Left lung (tissue), 14 donors: ENCODE measurements at regions of chr3 and their contacts with region 1.

Region 1: GRCh38 chr3:49839193-49839809 is 17.1 kb downstream of the TRAIP start:
- DNase-seq: peak; percentile 75 to 89 (median 82)
- ATAC-seq: peak; percentile 95
- H3K4me3 ChIP-seq: no peak overlapping the region
- H3K27ac ChIP-seq: no peak overlapping the region
- H3K4me1 ChIP-seq: peaks cover 0 to 2% of the 10 kb centered on the region in 2 donors
- H3K27me3 ChIP-seq: no peaks in the 10 kb centered on the region
- CTCF ChIP-seq: peak; percentile 82 to 85

Region 2: GRCh38 chr3:49719214-49719884 is 120.0 kb before region 1 on chr3 and contains the start of gene AMIGO3:
- intact Hi-C with region 1: loop called in 1 of 2 experiments (anchors 10 kb)
- DNase-seq: peak; percentile 91 to 99 (median 95)
- ATAC-seq: peak; percentile 77
- H3K4me3 ChIP-seq: peak within 1 kb of the TSS; percentile 37 to 50
- H3K27ac ChIP-seq: peak within 1 kb of the TSS; percentile 3 to 7
- H3K4me1 ChIP-seq: peaks cover 19 to 55% of the 10 kb centered on the region in 2 donors
- H3K27me3 ChIP-seq: no peaks in the 10 kb centered on the region
- CTCF ChIP-seq: peak; percentile 46 to 62
- polyA plus RNA-seq, gene AMIGO3: 0.54 to 2.4 (median 1.9) TPM

Region 3: DNA sequence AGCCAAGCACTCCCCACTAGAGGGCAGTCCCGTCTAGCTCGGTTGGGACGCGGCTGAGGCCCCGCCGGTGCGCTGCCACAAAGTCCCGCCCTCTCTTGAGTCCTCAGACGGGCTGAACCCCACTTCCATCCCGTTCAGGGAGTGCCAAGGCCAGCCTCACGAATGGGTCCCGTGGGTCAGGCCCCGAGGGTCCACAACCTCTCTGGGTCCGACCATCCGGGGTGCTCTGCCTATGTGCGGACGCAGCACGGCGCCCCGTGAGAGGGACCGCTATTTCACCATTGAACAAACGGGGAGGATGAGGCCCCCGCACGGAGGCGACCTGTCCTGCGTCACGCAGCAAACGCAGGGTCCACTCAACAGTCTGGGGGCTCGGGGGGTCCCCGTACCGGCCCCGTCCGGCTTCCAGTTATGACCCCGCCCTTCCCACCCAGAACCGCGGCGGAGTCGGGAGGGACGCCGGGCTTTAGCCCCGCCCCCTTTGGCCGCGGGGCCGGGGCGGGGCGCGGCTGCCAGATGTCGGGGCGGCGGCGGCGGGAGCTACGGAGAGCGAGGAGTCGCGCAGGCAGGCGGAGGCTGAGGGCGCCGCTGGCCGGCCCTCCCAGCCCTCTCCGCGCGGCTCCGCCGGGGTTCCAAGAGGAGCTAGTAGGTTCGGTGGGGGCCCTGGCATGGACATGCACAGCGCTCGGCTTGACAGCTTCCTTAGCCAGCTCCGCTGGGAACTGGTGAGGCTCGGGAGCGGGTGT is 36.4 kb before region 1 on chr3 and contains the start of gene INKA1:
- intact Hi-C with region 1: loop called in 1 of 2 experiments (anchors 5 kb)
- DNase-seq: peak; percentile 88 to 98 (median 92)
- ATAC-seq: peak; percentile 92
- H3K4me3 ChIP-seq: peak within 1 kb of the TSS; percentile 88 to 94
- H3K27ac ChIP-seq: peak within 1 kb of the TSS; percentile 89 to 94
- H3K4me1 ChIP-seq: peaks cover 30 to 46% of the 10 kb centered on the region in 2 donors
- H3K27me3 ChIP-seq: no peaks in the 10 kb centered on the region
- CTCF ChIP-seq: peak; percentile 87 to 92
- polyA plus RNA-seq, gene INKA1: 10.4 to 18.9 (median 15.8) TPM